CD14-positive monocyte (primary cell): ENCODE measurements at regions of chr10 and their contacts with region 1.

Region 1: DNA sequence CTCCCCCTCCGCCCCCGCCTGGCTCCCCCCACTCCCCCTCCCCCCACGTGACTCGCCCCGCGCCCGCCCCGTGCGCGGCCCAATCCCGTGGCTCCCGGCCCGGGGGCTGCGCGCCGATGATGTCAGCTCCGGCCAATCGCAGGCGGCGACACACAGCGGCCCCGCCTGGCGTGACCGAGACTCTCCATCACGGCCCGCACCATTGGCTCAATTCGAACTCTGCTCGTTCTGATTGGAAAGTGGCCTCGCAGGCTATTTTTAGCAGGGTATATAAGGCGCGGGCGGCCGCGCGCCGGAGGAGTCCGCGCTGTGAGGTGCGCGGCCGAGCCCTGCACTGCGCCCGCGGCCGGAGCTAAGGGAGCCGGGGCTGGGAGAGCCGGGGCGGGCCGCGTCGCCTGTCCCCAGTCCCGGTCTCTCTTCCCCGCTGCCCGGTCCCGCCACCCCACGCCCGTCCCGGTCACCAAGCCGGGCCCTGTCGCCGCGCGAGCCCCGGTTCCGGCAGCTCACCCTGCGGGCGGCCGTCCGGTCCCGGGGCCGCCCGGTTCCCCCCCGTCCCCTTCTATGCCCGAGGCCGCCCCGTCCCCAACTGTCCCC is 345 bp upstream of the KLF6 start:
- DNase-seq: peak; percentile 98 to 99 (median 99)
- H3K4me3 ChIP-seq: peak overlapping the region; percentile 94 to 99 (median 95)
- H3K4me3 Mint-ChIP-seq: peak overlapping the region; percentile 88 to 94
- H3K27ac ChIP-seq: peak overlapping the region; percentile 95 to 99
- H3K27ac Mint-ChIP-seq: peak overlapping the region; percentile 94 to 99 (median 98)
- H3K4me1 ChIP-seq: peaks cover 27 to 29% of the 10 kb centered on the region in 2 donors
- H3K4me1 Mint-ChIP-seq: peaks cover 32% of the 10 kb centered on the region
- H3K27me3 ChIP-seq: no peaks in the 10 kb centered on the region
- H3K27me3 Mint-ChIP-seq: peaks cover 1 to 8% (median 3%) of the 10 kb centered on the region in 3 donors
- CTCF ChIP-seq: no peak

Region 2: GRCh38 chr10:2844925-2845324 is 940.4 kb before region 1 on chr10:
- intact Hi-C with region 1: no loop called
- DNase-seq: no peak
- H3K4me3 ChIP-seq: no peak overlapping the region
- H3K4me3 Mint-ChIP-seq: no peak overlapping the region
- H3K27ac ChIP-seq: no peak overlapping the region
- H3K27ac Mint-ChIP-seq: no peak overlapping the region
- H3K4me1 ChIP-seq: no peaks in the 10 kb centered on the region
- H3K4me1 Mint-ChIP-seq: no peaks in the 10 kb centered on the region
- H3K27me3 ChIP-seq: no peaks in the 10 kb centered on the region
- H3K27me3 Mint-ChIP-seq: peaks cover 0 to 6% (median 4%) of the 10 kb centered on the region in 3 donors
- CTCF ChIP-seq: no peak

Region 3: GRCh38 chr10:3805791-3806461 is 20.6 kb after region 1 on chr10:
- intact Hi-C with region 1: loop called (anchors 1 to 2 kb)
- DNase-seq: peak; percentile 88 to 95 (median 94)
- H3K4me3 ChIP-seq: peak overlapping the region in 1 of 3 experiments; percentile 24
- H3K4me3 Mint-ChIP-seq: peak overlapping the region; percentile 21 to 54
- H3K27ac ChIP-seq: peak overlapping the region; percentile 85 to 100
- H3K27ac Mint-ChIP-seq: peak overlapping the region in 1 of 7 donors; percentile 98
- H3K4me1 ChIP-seq: peaks cover 55 to 60% of the 10 kb centered on the region in 2 donors
- H3K4me1 Mint-ChIP-seq: peaks cover 12% of the 10 kb centered on the region
- H3K27me3 ChIP-seq: no peaks in the 10 kb centered on the region
- H3K27me3 Mint-ChIP-seq: no peaks in the 10 kb centered on the region
- CTCF ChIP-seq: no peak

Region 4: DNA sequence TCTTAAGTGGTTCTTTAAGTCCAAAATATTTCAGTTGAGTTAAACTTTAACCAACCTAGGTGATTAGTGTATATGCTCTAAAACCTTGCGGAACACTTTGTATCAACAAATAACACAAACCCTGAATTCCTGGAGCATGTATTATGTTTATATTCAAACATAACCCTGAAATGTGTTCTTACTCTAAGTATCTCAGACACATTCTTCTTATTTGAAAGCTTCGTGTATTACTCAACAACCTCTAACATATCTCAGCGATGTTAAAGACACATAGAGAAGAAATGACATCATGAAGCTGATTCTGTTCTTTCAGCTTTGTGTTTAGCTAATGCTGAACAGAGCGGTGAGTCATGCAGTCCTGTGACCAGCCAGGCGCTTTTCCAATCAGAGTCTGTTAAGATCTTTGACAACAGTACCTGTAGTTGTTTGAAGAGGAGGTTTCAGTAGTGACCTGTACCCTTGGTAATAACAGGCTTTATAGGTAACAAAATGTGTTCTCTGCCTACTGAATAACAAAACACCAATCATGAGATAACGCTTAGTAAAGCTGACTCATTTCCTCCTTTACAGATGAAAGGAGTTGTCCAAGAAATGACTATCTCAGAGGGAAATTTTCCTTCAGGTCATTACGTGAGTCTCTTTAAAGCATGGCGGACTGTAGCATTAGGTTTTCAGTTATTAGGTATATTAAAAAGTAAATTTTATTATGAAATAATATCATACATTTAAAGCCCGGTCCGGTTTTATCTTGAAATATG is 67.0 kb after region 1 on chr10:
- intact Hi-C with region 1: loop called (anchors 1 to 2 kb)
- DNase-seq: peak; percentile 90 to 99 (median 97)
- H3K4me3 ChIP-seq: peak overlapping the region in 1 of 3 experiments; percentile 39
- H3K4me3 Mint-ChIP-seq: peak overlapping the region; percentile 2 to 65
- H3K27ac ChIP-seq: peak overlapping the region; percentile 99 to 100
- H3K27ac Mint-ChIP-seq: peak overlapping the region; percentile 96 to 99 (median 99)
- H3K4me1 ChIP-seq: peaks cover 47 to 50% of the 10 kb centered on the region in 2 donors
- H3K4me1 Mint-ChIP-seq: peaks cover 41% of the 10 kb centered on the region
- H3K27me3 ChIP-seq: no peaks in the 10 kb centered on the region
- H3K27me3 Mint-ChIP-seq: peaks cover 0 to 2% (median 0%) of the 10 kb centered on the region in 3 donors
- CTCF ChIP-seq: no peak

Region 5: DNA sequence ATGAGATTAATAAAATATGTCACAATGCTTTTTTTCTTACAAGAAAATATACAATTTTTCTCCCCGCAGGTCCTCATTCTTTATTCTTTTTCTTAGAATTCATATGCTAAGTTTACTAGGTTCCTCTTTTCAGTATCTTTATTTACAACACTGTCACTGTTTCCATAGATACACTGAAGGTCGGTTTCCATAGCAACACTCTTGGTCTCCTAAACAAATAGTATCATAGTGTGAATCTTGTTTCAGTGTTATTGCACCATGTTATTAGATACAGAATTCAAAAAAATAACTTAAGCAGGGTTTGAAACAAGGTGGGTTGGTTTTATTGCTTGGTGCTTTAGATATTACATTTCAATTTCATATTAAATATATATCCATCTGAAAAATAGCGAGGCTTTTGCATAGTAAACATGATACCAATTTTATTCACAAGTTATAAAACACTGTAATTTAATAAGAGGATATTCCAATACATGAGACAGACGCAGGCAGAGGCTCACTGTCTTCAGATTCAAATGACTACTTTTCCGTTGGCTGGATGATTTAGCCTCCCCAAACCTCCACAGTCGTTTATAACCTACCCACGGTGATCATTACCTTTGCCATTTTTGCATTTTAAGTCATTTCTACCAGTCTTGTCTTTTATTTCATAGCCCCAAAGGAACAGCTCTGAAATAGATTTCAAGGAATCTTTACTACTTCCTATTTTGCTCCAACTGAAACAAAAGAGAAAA is 88.5 kb after region 1 on chr10:
- intact Hi-C with region 1: loop called (anchors 1 to 5 kb)
- DNase-seq: peak; percentile 92 to 99 (median 95)
- H3K4me3 ChIP-seq: no peak overlapping the region
- H3K4me3 Mint-ChIP-seq: peak overlapping the region in 1 of 2 donors; percentile 67
- H3K27ac ChIP-seq: peak overlapping the region; percentile 58 to 91
- H3K27ac Mint-ChIP-seq: peak overlapping the region; percentile 93 to 99 (median 97)
- H3K4me1 ChIP-seq: peaks cover 52 to 62% of the 10 kb centered on the region in 2 donors
- H3K4me1 Mint-ChIP-seq: peaks cover 49% of the 10 kb centered on the region
- H3K27me3 ChIP-seq: no peaks in the 10 kb centered on the region
- H3K27me3 Mint-ChIP-seq: peaks cover 0 to 1% (median 0%) of the 10 kb centered on the region in 3 donors
- CTCF ChIP-seq: no peak

Region 6: GRCh38 chr10:4051011-4051640 is 265.8 kb after region 1 on chr10:
- intact Hi-C with region 1: loop called in 1 of 2 experiments (anchors 10 kb)
- DNase-seq: peak; percentile 23 to 63 (median 41)
- H3K4me3 ChIP-seq: peak overlapping the region; percentile 31 to 95 (median 77)
- H3K4me3 Mint-ChIP-seq: peak overlapping the region; percentile 68 to 95
- H3K27ac ChIP-seq: peak overlapping the region; percentile 41 to 97
- H3K27ac Mint-ChIP-seq: peak overlapping the region; percentile 91 to 97 (median 95)
- H3K4me1 ChIP-seq: peaks cover 32 to 39% of the 10 kb centered on the region in 2 donors
- H3K4me1 Mint-ChIP-seq: peaks cover 35% of the 10 kb centered on the region
- H3K27me3 ChIP-seq: no peaks in the 10 kb centered on the region
- H3K27me3 Mint-ChIP-seq: no peaks in the 10 kb centered on the region
- CTCF ChIP-seq: no peak

Region 7: DNA sequence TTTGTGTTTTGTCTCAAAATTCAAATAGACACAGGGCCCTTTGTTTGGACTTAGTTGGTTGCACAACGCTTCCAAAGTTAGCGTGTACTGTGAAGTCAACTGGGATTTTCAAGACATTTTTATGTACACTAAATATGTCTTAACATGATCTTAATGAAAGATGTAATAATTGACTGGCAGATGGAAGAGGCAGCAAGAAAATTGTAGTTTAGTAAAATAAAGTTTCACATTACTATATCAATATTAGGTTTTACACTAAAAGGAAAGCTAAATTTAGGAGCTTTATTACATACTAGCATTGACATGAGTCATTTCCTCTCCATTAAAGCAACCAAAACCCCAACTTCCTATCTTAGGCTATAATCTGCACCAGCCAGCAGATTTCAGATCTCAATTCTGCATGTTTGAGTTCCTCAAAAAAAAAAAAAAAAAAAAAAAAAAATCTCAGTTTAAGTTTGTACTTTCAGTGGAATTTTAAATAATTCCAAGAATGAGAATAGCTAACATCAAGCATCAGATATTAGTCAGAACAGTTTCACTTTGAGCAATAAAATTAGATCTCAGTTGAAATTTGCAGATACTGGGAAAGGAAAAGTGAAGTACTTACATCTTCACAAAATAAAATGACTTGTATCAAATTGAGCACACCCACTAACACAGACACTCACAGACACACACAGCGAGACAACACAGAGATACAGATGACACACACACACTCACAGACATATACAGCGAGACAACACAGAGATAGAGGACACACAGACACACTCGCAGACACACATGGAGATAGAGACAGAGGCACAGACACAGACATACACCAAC is 346.3 kb after region 1 on chr10:
- intact Hi-C with region 1: loop called in 1 of 2 experiments (anchors 5 kb)
- DNase-seq: peak; percentile 83 to 96 (median 93)
- H3K4me3 ChIP-seq: peak overlapping the region; percentile 6 to 63 (median 25)
- H3K4me3 Mint-ChIP-seq: no peak overlapping the region
- H3K27ac ChIP-seq: peak overlapping the region; percentile 64 to 93
- H3K27ac Mint-ChIP-seq: no peak overlapping the region
- H3K4me1 ChIP-seq: peaks cover 65 to 71% of the 10 kb centered on the region in 2 donors
- H3K4me1 Mint-ChIP-seq: peaks cover 18% of the 10 kb centered on the region
- H3K27me3 ChIP-seq: no peaks in the 10 kb centered on the region
- H3K27me3 Mint-ChIP-seq: peaks cover 0 to 2% (median 0%) of the 10 kb centered on the region in 3 donors
- CTCF ChIP-seq: no peak

Region 8: GRCh38 chr10:4656576-4657182 is 871.3 kb after region 1 on chr10:
- intact Hi-C with region 1: loop called in 1 of 2 experiments (anchors 10 kb)
- DNase-seq: peak; percentile 13 to 61 (median 59)
- H3K4me3 ChIP-seq: no peak overlapping the region
- H3K4me3 Mint-ChIP-seq: no peak overlapping the region
- H3K27ac ChIP-seq: no peak overlapping the region
- H3K27ac Mint-ChIP-seq: no peak overlapping the region
- H3K4me1 ChIP-seq: no peaks in the 10 kb centered on the region
- H3K4me1 Mint-ChIP-seq: peaks cover 3% of the 10 kb centered on the region
- H3K27me3 ChIP-seq: peaks cover 0 to 2% of the 10 kb centered on the region in 2 donors
- H3K27me3 Mint-ChIP-seq: peaks cover 3 to 5% (median 3%) of the 10 kb centered on the region in 3 donors
- CTCF ChIP-seq: peak; percentile 93